Naive thymus-derived CD4-positive, alpha-beta T cell (primary cell): ENCODE measurements at regions of chr3 and their contacts with region 1.

Region 1: DNA sequence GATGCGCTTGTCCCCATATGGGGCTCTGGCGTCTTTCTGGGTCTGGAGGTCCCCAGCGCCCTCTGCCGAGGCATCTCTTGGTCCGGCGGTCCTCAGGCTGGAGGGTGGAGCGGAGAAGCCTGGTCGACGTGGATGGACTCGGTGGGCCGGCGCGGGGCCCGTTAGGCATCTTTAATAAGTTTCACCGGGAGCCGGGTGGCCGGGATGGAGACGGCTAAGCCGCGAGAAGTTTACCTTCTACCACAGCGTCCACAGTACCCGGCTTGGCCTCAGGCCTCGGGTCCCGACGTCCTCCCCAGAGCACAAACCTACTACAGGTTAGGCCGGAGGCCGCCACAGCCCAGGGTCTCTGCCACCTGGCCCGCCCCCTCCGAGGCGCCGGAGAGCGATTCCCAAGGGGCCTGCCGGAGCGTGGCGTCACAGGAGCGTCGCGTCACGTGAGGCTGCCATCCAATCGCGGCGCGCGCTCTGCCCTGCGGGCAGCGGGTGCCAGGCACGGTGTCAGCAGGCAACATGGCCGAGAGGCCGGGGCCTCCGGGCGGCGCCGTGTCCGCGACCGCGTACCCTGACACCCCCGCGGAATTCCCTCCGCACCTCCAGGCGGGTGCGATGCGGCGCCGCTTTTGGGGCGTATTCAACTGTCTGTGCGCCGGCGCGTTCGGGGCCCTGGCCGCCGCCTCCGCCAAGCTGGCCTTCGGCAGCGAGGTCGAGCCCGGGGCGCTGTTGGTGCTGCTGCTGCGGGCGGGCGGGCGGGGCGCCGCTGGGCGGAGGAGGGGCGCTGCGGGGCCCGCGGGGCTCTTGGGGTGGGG is at the start of gene TMEM42:
- DNase-seq: peak; percentile 81 to 89 (median 84)
- ATAC-seq: peak; percentile 97
- H3K4me3 ChIP-seq: peak within 1 kb of the TSS; percentile 78
- H3K4me3 Mint-ChIP-seq: peak within 1 kb of the TSS; percentile 88 to 92 (median 91)
- H3K27ac ChIP-seq: peak within 1 kb of the TSS; percentile 76
- H3K27ac Mint-ChIP-seq: peak within 1 kb of the TSS; percentile 86 to 97 (median 92)
- H3K4me1 ChIP-seq: peaks cover 15 to 29% of the 10 kb centered on the region in 2 donors
- H3K4me1 Mint-ChIP-seq: peaks cover 23 to 48% (median 43%) of the 10 kb centered on the region in 7 donors
- H3K27me3 ChIP-seq: no peaks in the 10 kb centered on the region
- H3K27me3 Mint-ChIP-seq: no peaks in the 10 kb centered on the region
- total RNA-seq, gene TMEM42: 12.1 to 25.1 (median 16.4) TPM

Region 2: GRCh38 chr3:44554626-44555592 is 306.7 kb before region 1 on chr3 and contains the start of gene ZKSCAN7:
- CTCF ChIA-PET with region 1: no interaction called
- POLR2A ChIA-PET with region 1: no interaction called
- intact Hi-C with region 1: loop called (anchors 1 kb)
- DNase-seq: peak; percentile 12 to 49 (median 42)
- ATAC-seq: peak; percentile 71
- H3K4me3 ChIP-seq: peak within 1 kb of the TSS; percentile 87
- H3K4me3 Mint-ChIP-seq: peak within 1 kb of the TSS; percentile 78 to 94 (median 91)
- H3K27ac ChIP-seq: peak within 1 kb of the TSS; percentile 47
- H3K27ac Mint-ChIP-seq: peak within 1 kb of the TSS; percentile 6 to 94 (median 82)
- H3K4me1 ChIP-seq: peaks cover 9 to 14% of the 10 kb centered on the region in 2 donors
- H3K4me1 Mint-ChIP-seq: peaks cover 10 to 34% (median 26%) of the 10 kb centered on the region in 7 donors
- H3K27me3 ChIP-seq: no peaks in the 10 kb centered on the region
- H3K27me3 Mint-ChIP-seq: peaks cover 0 to 4% (median 1%) of the 10 kb centered on the region in 5 donors
- total RNA-seq, gene ZKSCAN7: 1.1 to 4.5 (median 1.7) TPM

Region 3: GRCh38 chr3:44923632-44924456 is 62.2 kb after region 1 on chr3:
- CTCF ChIA-PET with region 1: no interaction called
- POLR2A ChIA-PET with region 1: no interaction called
- intact Hi-C with region 1: no loop called
- DNase-seq: no peak
- ATAC-seq: no peak
- H3K4me3 ChIP-seq: no peak overlapping the region
- H3K4me3 Mint-ChIP-seq: no peak overlapping the region
- H3K27ac ChIP-seq: no peak overlapping the region
- H3K27ac Mint-ChIP-seq: peak overlapping the region in 2 of 9 donors; percentile 2 to 62
- H3K4me1 ChIP-seq: no peaks in the 10 kb centered on the region
- H3K4me1 Mint-ChIP-seq: no peaks in the 10 kb centered on the region
- H3K27me3 ChIP-seq: no peaks in the 10 kb centered on the region
- H3K27me3 Mint-ChIP-seq: no peaks in the 10 kb centered on the region